WTC11 (cell line): ENCODE measurements at regions of chr16 and their contacts with region 1.

Region 1: GRCh38 chr16:81940781-81941560 is 70.3 kb downstream of the SDR42E1 start:
- DNase-seq: no peak
- ATAC-seq: peak; percentile 9; the same call in 1 of the 2 replicates
- H3K4me3 Mint-ChIP-seq: no peak overlapping the region
- H3K27ac Mint-ChIP-seq: no peak overlapping the region
- H3K4me1 Mint-ChIP-seq: peaks cover 79% of the 10 kb centered on the region
- H3K27me3 Mint-ChIP-seq: peaks cover 20% of the 10 kb centered on the region
- CTCF ChIP-seq: peak; percentile 10; the same call in 1 of the 2 replicates

Region 2: GRCh38 chr16:81885976-81886586 is 54.9 kb before region 1 on chr16:
- CTCF ChIA-PET with region 1: interaction called, 12 read pairs
- POLR2A ChIA-PET with region 1: no interaction called
- DNase-seq: peak; percentile 60
- ATAC-seq: peak; percentile 86
- H3K4me3 Mint-ChIP-seq: no peak overlapping the region
- H3K27ac Mint-ChIP-seq: no peak overlapping the region
- H3K4me1 Mint-ChIP-seq: no peaks in the 10 kb centered on the region
- H3K27me3 Mint-ChIP-seq: no peaks in the 10 kb centered on the region
- CTCF ChIP-seq: peak; percentile 70

Region 3: GRCh38 chr16:81956213-81956948 is 15.4 kb after region 1 on chr16:
- CTCF ChIA-PET with region 1: no interaction called
- POLR2A ChIA-PET with region 1: no interaction called
- DNase-seq: no peak
- ATAC-seq: no peak
- H3K4me3 Mint-ChIP-seq: no peak overlapping the region
- H3K27ac Mint-ChIP-seq: no peak overlapping the region
- H3K4me1 Mint-ChIP-seq: no peaks in the 10 kb centered on the region
- H3K27me3 Mint-ChIP-seq: no peaks in the 10 kb centered on the region
- CTCF ChIP-seq: no peak

Region 4: GRCh38 chr16:81973737-81974136 is 32.8 kb after region 1 on chr16:
- CTCF ChIA-PET with region 1: interaction called, 24 read pairs
- POLR2A ChIA-PET with region 1: no interaction called
- DNase-seq: peak; percentile 26
- ATAC-seq: peak; percentile 97
- H3K4me3 Mint-ChIP-seq: no peak overlapping the region
- H3K27ac Mint-ChIP-seq: peak overlapping the region; percentile 15; the same call in 1 of the 2 replicates
- H3K4me1 Mint-ChIP-seq: peaks cover 46% of the 10 kb centered on the region
- H3K27me3 Mint-ChIP-seq: peaks cover 14% of the 10 kb centered on the region
- CTCF ChIP-seq: no peak

Region 5: DNA sequence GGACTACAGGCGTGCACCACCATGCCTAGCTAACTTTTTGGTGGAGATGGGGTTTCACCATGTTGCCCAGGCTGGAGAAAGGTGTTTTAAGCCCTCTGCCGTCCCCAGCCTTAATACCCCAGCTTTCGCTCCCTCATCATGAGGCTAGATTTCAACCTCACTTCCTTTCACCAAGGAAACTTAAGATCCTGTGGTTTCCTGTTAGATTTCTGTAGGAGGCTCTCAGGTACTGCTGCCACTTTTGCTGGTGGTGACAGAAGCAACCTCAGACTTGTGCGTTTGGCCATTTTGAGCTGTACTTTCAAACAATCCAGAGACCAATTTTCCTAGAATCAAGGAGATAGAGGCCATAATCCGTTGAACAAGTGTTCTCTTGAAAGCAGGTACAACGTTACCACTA is 192.8 kb after region 1 on chr16:
- CTCF ChIA-PET with region 1: no interaction called
- POLR2A ChIA-PET with region 1: no interaction called
- DNase-seq: no peak
- ATAC-seq: no peak
- H3K4me3 Mint-ChIP-seq: no peak overlapping the region
- H3K27ac Mint-ChIP-seq: peak overlapping the region; percentile 57; the same call in 1 of the 2 replicates
- H3K4me1 Mint-ChIP-seq: peaks cover 16% of the 10 kb centered on the region
- H3K27me3 Mint-ChIP-seq: no peaks in the 10 kb centered on the region
- CTCF ChIP-seq: no peak